Activated CD8-positive, alpha-beta T cell treated with anti-CD3 and anti-CD28 coated beads for 36 hours (primary cell): ENCODE measurements at regions of chr17 and their contacts with region 1.

Region 1: DNA sequence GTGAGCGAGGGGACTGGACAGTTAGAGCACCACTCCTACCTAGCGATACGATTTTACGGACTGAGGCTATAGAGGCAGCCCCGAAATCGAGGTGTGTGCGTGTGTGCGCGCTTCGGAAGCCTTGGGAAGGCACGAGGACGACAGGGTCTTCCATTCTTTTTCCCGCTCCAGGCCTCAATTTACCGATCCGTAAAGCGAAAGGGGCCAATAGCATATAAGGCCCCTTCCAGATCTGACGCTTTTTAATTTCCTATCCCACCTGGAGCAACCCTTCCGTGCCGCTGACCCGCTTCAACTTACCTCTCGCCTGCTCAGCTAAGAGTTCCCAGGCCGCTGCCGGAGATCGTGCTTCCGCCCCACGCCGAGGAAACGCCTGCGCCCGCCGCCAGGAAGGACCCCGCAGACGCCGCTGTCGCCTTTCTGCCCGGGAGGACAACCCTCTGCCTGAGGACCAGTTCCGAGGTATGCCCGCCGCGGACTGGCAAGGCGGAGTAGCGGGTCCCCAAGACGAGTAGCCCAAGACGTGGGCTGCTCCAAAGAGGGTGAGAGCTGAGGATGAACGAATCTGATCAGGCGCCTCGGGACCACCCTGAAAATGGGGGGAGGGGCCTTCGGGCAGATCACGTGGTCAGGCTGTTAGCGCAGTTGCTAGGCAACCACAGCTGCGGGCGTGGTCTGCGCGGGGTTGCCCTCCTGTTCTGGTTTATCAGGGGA is at the start of gene EFTUD2:
- DNase-seq: peak; percentile 94
- ATAC-seq: peak; percentile 96
- H3K4me3 Mint-ChIP-seq: peak within 1 kb of the TSS; percentile 85
- H3K27ac Mint-ChIP-seq: peak within 1 kb of the TSS; percentile 100
- H3K4me1 Mint-ChIP-seq: peaks cover 27% of the 10 kb centered on the region
- H3K27me3 Mint-ChIP-seq: no peaks in the 10 kb centered on the region
- CTCF ChIP-seq: no peak
- total RNA-seq, gene EFTUD2: 207 to 208 TPM

Region 2: DNA sequence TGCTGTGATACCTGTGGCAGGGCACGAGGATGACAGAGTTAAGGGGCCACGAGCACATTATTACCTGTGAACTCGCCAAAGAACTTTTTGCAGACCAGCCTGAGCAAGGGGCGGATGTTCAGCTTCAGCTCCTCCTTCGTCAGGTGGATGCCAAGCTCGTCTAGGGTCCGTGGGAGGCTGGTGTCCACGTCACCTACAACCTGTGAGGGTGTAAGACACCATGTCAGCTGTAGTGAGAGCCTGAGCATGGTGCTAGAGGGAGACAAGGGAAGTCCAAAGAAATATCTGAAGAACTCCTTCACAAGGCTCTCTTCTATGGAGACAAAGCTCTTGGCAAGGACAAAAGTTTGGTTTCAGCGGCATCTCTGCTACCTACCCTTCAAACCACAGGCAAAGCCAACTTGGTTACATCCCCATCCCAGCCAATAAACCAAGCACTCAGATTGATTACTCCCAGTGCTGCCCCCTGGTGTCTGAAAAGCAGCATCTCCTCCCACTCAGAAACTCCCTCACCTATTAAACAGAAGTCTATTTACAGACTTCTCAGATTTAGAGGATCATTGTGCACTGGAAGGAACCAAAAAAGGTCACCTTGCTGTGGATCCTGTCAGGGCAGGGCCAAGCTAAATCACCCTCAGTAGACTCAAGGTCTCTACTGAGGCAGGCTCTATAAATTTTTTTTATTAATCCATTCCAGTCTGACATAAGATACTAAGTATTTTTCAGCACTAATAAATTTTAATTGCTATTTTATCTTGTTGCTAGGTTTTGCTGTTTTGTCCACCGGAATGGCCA is 34.2 kb before region 1 on chr17:
- CTCF ChIA-PET with region 1: interaction called, 5 read pairs
- POLR2A ChIA-PET with region 1: interaction called, 10 read pairs
- intact Hi-C with region 1: no loop called
- DNase-seq: peak; percentile 79
- ATAC-seq: peak; percentile 80
- H3K4me3 Mint-ChIP-seq: no peak overlapping the region
- H3K27ac Mint-ChIP-seq: no peak overlapping the region
- H3K4me1 Mint-ChIP-seq: no peaks in the 10 kb centered on the region
- H3K27me3 Mint-ChIP-seq: no peaks in the 10 kb centered on the region
- CTCF ChIP-seq: peak; percentile 67

Region 3: DNA sequence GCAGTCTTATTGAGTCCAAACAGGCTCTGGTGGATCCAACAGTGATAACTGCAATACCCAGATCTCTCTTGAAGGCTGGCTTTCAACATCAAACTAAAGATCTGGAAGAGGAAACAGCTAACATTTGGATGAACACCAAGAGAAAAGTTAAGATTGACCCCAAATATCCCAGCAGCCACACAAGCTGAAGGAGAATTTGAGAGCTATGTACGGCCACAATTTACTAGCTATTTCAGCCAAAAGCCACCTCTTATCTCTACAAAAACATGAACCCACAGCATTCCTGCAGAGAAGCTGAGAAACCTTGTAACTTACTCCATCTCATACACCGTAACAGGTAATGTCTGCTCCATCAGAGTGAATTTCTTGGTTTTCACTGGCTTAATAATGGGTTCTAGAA is 14.3 kb before region 1 on chr17:
- CTCF ChIA-PET with region 1: interaction called, 10 read pairs
- POLR2A ChIA-PET with region 1: interaction called, 8 read pairs
- intact Hi-C with region 1: no loop called
- DNase-seq: no peak
- ATAC-seq: no peak
- H3K4me3 Mint-ChIP-seq: no peak overlapping the region
- H3K27ac Mint-ChIP-seq: no peak overlapping the region
- H3K4me1 Mint-ChIP-seq: peaks cover 10% of the 10 kb centered on the region
- H3K27me3 Mint-ChIP-seq: no peaks in the 10 kb centered on the region
- CTCF ChIP-seq: no peak

Region 4: GRCh38 chr17:44919885-44920564 is 20.8 kb after region 1 on chr17:
- CTCF ChIA-PET with region 1: interaction called, 10 read pairs
- POLR2A ChIA-PET with region 1: interaction called, 6 read pairs
- intact Hi-C with region 1: no loop called
- DNase-seq: peak; percentile 83
- ATAC-seq: peak; percentile 95
- H3K4me3 Mint-ChIP-seq: no peak overlapping the region
- H3K27ac Mint-ChIP-seq: no peak overlapping the region
- H3K4me1 Mint-ChIP-seq: peaks cover 4% of the 10 kb centered on the region
- H3K27me3 Mint-ChIP-seq: peaks cover 12% of the 10 kb centered on the region
- CTCF ChIP-seq: peak; percentile 27

Region 5: GRCh38 chr17:44947461-44948314 is 48.5 kb after region 1 on chr17 and contains the start of gene KIF18B:
- CTCF ChIA-PET with region 1: no interaction called
- POLR2A ChIA-PET with region 1: interaction called, 11 read pairs
- intact Hi-C with region 1: no loop called
- DNase-seq: peak; percentile 96
- ATAC-seq: peak; percentile 97
- H3K4me3 Mint-ChIP-seq: peak within 1 kb of the TSS; percentile 90
- H3K27ac Mint-ChIP-seq: peak within 1 kb of the TSS; percentile 92
- H3K4me1 Mint-ChIP-seq: peaks cover 11% of the 10 kb centered on the region
- H3K27me3 Mint-ChIP-seq: peaks cover 3% of the 10 kb centered on the region
- CTCF ChIP-seq: no peak
- total RNA-seq, gene KIF18B: 38.1 to 40.3 TPM

Region 6: GRCh38 chr17:45092932-45093430 is 193.8 kb after region 1 on chr17:
- CTCF ChIA-PET with region 1: no interaction called
- POLR2A ChIA-PET with region 1: no interaction called
- intact Hi-C with region 1: no loop called
- DNase-seq: no peak
- ATAC-seq: no peak
- H3K4me3 Mint-ChIP-seq: no peak overlapping the region
- H3K27ac Mint-ChIP-seq: no peak overlapping the region
- H3K4me1 Mint-ChIP-seq: peaks cover 2% of the 10 kb centered on the region
- H3K27me3 Mint-ChIP-seq: no peaks in the 10 kb centered on the region
- CTCF ChIP-seq: no peak